K562 (cell line): ENCODE measurements at regions of chr20 and their contacts with region 1.

Region 1: DNA sequence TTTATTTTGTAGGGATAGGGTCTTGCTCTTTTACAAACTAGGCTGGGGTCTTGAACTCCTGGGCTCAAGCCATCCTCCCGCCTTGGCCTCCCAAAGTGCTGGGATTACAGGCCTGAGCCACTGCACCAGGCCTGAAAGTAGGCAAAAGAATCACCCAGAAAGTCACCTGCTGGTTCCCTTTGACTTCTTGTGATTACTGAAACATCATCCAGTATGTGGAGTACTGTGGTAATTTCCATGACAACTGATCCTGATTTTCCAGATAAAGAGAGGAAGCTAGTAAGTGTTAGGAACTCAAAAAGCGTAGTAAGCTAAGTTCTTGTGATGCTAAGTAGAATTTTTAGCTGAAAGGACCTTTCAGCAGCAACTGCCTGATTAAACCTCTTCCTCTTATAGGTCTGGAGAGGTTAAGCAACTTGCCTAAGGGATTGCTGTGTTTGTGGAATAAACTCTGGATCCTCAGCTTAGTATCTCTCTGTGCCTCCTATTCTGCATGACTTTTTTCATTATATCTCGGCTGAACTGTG is 16.8 kb downstream of the RALY start:
- DNase-seq: no peak
- ATAC-seq: no peak
- H3K4me3 ChIP-seq: no peak overlapping the region
- H3K27ac ChIP-seq: no peak overlapping the region
- H3K4me1 ChIP-seq: peaks cover 8 to 33% of the 10 kb centered on the region in 2 experiments; a peak in 3 of 5 replicates
- H3K27me3 ChIP-seq: no peaks in the 10 kb centered on the region
- CTCF ChIP-seq: no peak
- EP300 ChIP-seq: no peak
- POLR2A ChIP-seq: no peak
- RAD21 ChIP-seq: no peak

Region 2: DNA sequence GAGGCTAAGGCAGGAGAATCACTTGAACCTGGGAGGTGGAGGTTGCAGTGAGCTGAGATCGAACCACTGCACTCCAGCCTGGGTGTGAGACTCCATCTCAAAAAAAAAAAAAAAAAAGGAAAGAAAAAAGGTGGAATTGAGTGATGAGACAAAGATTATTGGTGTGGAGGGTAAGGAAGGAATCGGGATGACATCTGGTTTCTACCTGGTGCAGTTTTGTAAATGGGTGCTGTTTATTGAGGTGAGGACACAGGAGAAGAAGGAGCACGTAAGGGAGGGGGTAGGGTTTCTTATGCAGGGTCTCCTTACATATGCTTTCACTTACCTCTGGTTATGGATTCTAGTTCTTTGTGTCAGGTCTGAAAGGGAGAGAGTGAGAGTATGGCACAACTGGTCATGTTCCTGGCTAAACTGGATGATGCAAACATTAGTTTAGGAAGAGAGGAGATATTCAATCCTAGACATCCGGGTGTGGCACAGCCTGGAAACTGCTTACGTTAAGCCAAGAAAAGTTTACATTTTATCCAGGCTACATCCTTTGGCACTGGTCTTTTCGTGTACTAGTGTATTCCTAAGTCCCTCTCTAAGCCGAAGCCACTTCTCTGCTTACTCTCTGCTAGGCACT is 11.3 kb before region 1 on chr20:
- CTCF ChIA-PET with region 1: no interaction called
- POLR2A ChIA-PET with region 1: interaction called, 19 read pairs
- in situ Hi-C with region 1: no loop called
- intact Hi-C with region 1: no loop called
- DNase-seq: no peak
- ATAC-seq: no peak
- H3K4me3 ChIP-seq: no peak overlapping the region
- H3K27ac ChIP-seq: no peak overlapping the region
- H3K4me1 ChIP-seq: peaks cover 25 to 42% of the 10 kb centered on the region in 2 experiments
- H3K27me3 ChIP-seq: no peaks in the 10 kb centered on the region
- CTCF ChIP-seq: no peak
- EP300 ChIP-seq: no peak
- POLR2A ChIP-seq: no peak
- RAD21 ChIP-seq: no peak